ENCODE measurements at regions of chr12 and their contacts with region 1.

Region 1: GRCh38 chr12:118404876-118405521 is 28.6 kb downstream of the SUDS3 start:
- DNase-seq: peak; percentile 44
- H3K4me3 ChIP-seq: no peak overlapping the region
- H3K27ac ChIP-seq: no peak overlapping the region
- H3K4me1 ChIP-seq: no peaks in the 10 kb centered on the region
- H3K27me3 ChIP-seq: no peaks in the 10 kb centered on the region
- CTCF ChIP-seq: peak in 3 of 4 experiments; percentile 67 to 75 (median 71)
- POLR2A ChIP-seq: no peak

Region 2: GRCh38 chr12:118312578-118312977 is 92.4 kb before region 1 on chr12:
- intact Hi-C with region 1: no loop called
- DNase-seq: no peak
- H3K4me3 ChIP-seq: no peak overlapping the region
- H3K27ac ChIP-seq: no peak overlapping the region
- H3K4me1 ChIP-seq: peaks cover 6% of the 10 kb centered on the region
- H3K27me3 ChIP-seq: no peaks in the 10 kb centered on the region
- CTCF ChIP-seq: no peak
- POLR2A ChIP-seq: no peak

Region 3: GRCh38 chr12:118480235-118480634 is 75.2 kb after region 1 on chr12:
- intact Hi-C with region 1: no loop called
- DNase-seq: no peak
- H3K4me3 ChIP-seq: no peak overlapping the region
- H3K27ac ChIP-seq: no peak overlapping the region
- H3K4me1 ChIP-seq: no peaks in the 10 kb centered on the region
- H3K27me3 ChIP-seq: no peaks in the 10 kb centered on the region
- CTCF ChIP-seq: no peak
- POLR2A ChIP-seq: no peak

Region 4: DNA sequence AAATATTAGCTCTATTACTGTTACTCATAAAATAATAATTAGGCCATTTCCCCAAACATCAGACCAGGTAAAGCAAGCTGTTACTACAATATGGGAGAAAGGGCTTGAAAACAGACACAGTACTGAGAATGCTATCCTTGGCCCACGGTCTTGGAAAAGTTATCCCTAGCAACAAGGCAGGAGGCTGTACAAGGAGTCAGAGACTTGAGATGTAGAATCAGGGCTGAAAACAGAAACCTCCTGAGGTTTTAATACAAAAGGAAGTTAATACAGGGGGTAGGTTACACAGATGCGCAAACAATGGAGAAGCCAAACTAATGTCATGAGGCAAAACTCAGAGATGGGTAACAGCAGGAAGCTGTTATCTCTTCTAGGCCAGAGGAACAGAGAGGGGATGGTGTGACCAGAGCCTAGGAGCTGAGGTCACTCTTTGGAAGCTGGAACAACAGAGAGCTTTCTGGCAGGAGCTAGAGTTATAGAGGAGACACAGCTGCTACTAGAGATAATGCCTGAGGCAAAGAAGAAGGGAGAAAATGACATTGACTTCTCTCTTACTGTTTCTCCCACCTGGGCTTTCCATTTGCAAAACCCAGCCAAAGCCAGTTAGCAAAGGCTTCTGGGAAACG is 220.2 kb after region 1 on chr12:
- intact Hi-C with region 1: loop called (anchors 10 kb)
- DNase-seq: no peak
- H3K4me3 ChIP-seq: no peak overlapping the region
- H3K27ac ChIP-seq: no peak overlapping the region
- H3K4me1 ChIP-seq: no peaks in the 10 kb centered on the region
- H3K27me3 ChIP-seq: no peaks in the 10 kb centered on the region
- CTCF ChIP-seq: no peak
- POLR2A ChIP-seq: no peak

Region 5: GRCh38 chr12:118850244-118850825 is 445.3 kb after region 1 on chr12:
- intact Hi-C with region 1: loop called (anchors 10 kb)
- DNase-seq: no peak
- H3K4me3 ChIP-seq: no peak overlapping the region
- H3K27ac ChIP-seq: no peak overlapping the region
- H3K4me1 ChIP-seq: no peaks in the 10 kb centered on the region
- H3K27me3 ChIP-seq: no peaks in the 10 kb centered on the region
- CTCF ChIP-seq: peak in 1 of 4 experiments; percentile 23
- POLR2A ChIP-seq: no peak

Region 6: DNA sequence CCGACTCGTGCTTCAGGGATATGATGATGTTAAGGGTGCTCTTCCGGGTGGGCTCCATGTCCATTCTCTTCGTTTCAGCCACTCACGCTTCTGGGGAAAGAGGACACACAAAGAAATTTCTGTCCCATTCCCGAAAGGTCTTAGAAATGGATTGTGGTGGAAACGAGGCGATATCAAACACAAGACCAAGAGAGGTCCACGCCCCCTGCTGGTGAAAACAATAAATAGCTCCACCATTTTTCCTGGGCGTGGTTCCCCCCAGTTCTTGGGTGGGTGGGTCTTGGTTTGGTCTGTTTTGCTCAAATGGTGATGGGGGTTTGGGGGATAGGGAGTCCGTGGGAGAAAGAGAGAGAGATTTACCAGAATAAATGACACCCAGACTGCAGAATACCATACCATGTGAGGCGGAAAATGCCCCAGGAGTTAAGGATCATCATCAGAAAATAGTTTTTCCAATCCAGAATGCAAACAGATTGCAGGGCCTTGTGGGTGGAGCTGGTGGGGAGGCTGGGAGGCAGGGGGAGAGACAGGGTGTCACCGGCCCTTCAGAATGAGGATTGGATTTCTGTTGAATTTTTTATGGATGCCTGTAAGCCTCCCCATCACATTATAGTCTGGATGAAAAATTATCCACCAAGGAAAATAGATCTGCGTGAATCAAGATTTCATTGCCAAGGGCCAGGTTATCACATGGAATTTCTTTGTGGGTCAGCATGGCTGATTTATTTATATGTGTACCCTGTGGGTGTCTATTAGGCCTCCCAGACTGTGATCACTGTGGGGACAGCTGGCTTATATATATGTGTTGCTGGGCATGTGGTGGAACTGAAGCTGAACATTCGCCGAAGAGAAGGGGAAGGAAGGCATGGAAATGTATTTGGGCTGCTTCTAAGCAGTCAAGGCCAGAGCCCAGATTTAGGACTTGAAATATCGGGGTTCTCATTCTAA is 632.2 kb after region 1 on chr12:
- intact Hi-C with region 1: loop called (anchors 10 kb)
- DNase-seq: no peak
- H3K4me3 ChIP-seq: no peak overlapping the region
- H3K27ac ChIP-seq: no peak overlapping the region
- H3K4me1 ChIP-seq: no peaks in the 10 kb centered on the region
- H3K27me3 ChIP-seq: no peaks in the 10 kb centered on the region
- CTCF ChIP-seq: peak; percentile 12 to 51 (median 25)
- POLR2A ChIP-seq: no peak

Measured in prostate gland (tissue), 2 donors.